Activated naive CD4-positive, alpha-beta T cell treated with anti-CD3 and anti-CD28 coated beads for 36 hours (primary cell): ENCODE measurements at regions of chr4 and their contacts with region 1.

Region 1: GRCh38 chr4:77581724-77582123 is 23.9 kb upstream of the CXCL13 start:
- DNase-seq: no peak
- H3K4me3 Mint-ChIP-seq: no peak overlapping the region
- H3K27ac Mint-ChIP-seq: peak overlapping the region; percentile 80
- H3K4me1 Mint-ChIP-seq: peaks cover 33% of the 10 kb centered on the region
- H3K27me3 Mint-ChIP-seq: peaks cover 33% of the 10 kb centered on the region

Region 2: DNA sequence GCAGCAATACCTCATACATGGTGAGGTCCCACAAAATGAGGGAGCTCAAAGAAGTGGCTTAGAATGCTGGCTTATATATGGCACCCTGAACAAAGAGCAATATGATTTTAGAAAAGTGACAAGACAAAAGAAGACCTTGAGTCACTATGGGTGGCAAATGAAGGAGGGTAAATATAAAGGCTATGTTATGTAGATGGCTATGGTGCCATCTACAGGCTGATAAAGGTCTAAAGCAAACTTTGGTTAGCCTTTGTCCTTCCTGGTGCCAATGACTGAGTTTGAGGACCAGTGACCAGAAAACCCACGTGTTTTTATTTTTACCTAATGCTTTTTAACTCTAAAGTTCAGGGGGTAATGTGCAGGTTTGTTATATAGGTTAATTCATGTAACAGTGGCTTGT is 272.9 kb before region 1 on chr4:
- CTCF ChIA-PET with region 1: no interaction called
- intact Hi-C with region 1: no loop called
- DNase-seq: no peak
- H3K4me3 Mint-ChIP-seq: no peak overlapping the region
- H3K27ac Mint-ChIP-seq: no peak overlapping the region
- H3K4me1 Mint-ChIP-seq: no peaks in the 10 kb centered on the region
- H3K27me3 Mint-ChIP-seq: peaks cover 5% of the 10 kb centered on the region

Region 3: GRCh38 chr4:77538560-77539157 is 43.1 kb before region 1 on chr4:
- CTCF ChIA-PET with region 1: interaction called, 5 read pairs
- intact Hi-C with region 1: loop called (anchors 1 kb)
- DNase-seq: no peak
- H3K4me3 Mint-ChIP-seq: no peak overlapping the region
- H3K27ac Mint-ChIP-seq: peak overlapping the region; percentile 44
- H3K4me1 Mint-ChIP-seq: peaks cover 14% of the 10 kb centered on the region
- H3K27me3 Mint-ChIP-seq: peaks cover 54% of the 10 kb centered on the region

Region 4: DNA sequence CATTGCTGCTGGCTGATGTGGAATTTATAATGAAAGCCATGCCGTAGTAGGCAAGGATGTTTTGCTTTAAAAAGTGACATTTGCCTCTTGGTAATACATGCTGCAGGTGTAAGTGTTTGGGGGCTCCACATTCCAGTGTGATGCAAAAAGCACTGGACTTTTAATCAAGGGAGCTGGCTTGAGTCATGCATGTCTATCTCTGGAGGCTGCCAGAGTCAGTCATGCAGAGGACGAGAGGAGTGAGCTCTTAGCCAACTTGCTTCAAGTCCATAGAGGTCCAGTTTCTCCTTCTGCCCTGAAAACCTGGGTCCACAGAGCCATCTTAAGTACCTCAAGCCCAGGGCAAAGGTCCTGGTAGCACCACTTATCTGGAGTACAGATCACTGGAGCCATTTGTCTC is 12.3 kb after region 1 on chr4:
- CTCF ChIA-PET with region 1: interaction called, 8 read pairs
- intact Hi-C with region 1: loop called (anchors 1 kb)
- DNase-seq: no peak
- H3K4me3 Mint-ChIP-seq: no peak overlapping the region
- H3K27ac Mint-ChIP-seq: peak overlapping the region; percentile 75
- H3K4me1 Mint-ChIP-seq: peaks cover 49% of the 10 kb centered on the region
- H3K27me3 Mint-ChIP-seq: peaks cover 10% of the 10 kb centered on the region